Endothelial cell of umbilical vein (primary cell): ENCODE measurements at regions of chr2 and their contacts with region 1.

Region 1: DNA sequence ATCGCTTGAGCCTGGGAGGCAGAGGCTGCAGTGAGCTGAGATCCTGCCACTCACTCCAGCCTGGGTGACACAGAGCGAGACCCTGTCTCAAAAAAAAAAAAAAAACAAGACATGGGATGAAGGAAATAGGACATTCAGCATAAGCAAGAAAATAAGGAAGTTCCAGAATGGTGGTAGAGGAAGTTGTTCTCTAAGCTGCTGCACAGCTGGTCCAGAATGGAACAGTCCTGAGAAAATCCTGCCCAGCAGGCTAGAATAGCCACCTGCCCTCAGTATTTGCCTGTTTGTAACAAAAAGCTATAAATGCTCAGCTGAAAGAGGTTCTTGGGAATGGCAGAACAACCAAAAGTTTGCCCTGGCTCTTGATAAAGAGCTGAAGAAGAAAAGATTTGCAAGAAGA is 11.1 kb upstream of the MAPRE3 start:
- DNase-seq: no peak
- H3K4me3 ChIP-seq: no peak overlapping the region
- H3K27ac ChIP-seq: no peak overlapping the region
- H3K4me1 ChIP-seq: no peaks in the 10 kb centered on the region
- H3K27me3 ChIP-seq: peaks cover 19 to 33% of the 10 kb centered on the region in 2 experiments
- CTCF ChIP-seq: no peak
- POLR2A ChIP-seq: no peak

Region 2: DNA sequence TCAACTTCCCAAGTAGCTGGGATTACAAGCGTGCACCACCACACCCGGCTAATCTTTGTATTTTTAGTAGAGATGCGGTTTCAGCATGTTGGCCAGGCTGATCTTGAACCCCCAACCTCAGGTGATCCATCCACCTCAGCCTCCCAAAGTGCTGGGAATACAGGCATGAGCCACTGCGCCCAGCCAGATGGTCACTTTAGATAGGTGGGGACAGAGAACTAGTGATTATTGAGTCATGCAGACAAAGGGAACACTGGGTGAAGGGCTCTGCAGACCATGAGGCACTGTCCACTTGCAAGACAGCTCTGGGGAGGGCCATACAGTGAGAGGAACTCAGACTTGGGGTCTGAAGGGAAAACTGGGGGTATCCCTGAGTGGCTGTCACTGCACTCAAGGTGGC is 1732.5 kb before region 1 on chr2:
- CTCF ChIA-PET with region 1: no interaction called
- POLR2A ChIA-PET with region 1: no interaction called
- dilution Hi-C with region 1: no loop called
- intact Hi-C with region 1: no loop called
- DNase-seq: no peak
- H3K4me3 ChIP-seq: no peak overlapping the region
- H3K27ac ChIP-seq: no peak overlapping the region
- H3K4me1 ChIP-seq: no peaks in the 10 kb centered on the region
- H3K27me3 ChIP-seq: no peaks in the 10 kb centered on the region
- CTCF ChIP-seq: no peak
- POLR2A ChIP-seq: no peak

Region 3: GRCh38 chr2:26670171-26670570 is 289.2 kb before region 1 on chr2:
- CTCF ChIA-PET with region 1: no interaction called
- POLR2A ChIA-PET with region 1: no interaction called
- dilution Hi-C with region 1: no loop called
- intact Hi-C with region 1: no loop called
- DNase-seq: no peak
- H3K4me3 ChIP-seq: no peak overlapping the region
- H3K27ac ChIP-seq: no peak overlapping the region
- H3K4me1 ChIP-seq: no peaks in the 10 kb centered on the region
- H3K27me3 ChIP-seq: peaks cover 9 to 13% of the 10 kb centered on the region in 2 experiments
- CTCF ChIP-seq: no peak
- POLR2A ChIP-seq: no peak

Region 4: GRCh38 chr2:26970244-26970920 is 11.1 kb after region 1 on chr2 and contains the start of gene MAPRE3:
- CTCF ChIA-PET with region 1: interaction called, 19 read pairs
- POLR2A ChIA-PET with region 1: no interaction called
- dilution Hi-C with region 1: no loop called
- intact Hi-C with region 1: no loop called
- DNase-seq: peak; percentile 85
- H3K4me3 ChIP-seq: peak within 1 kb of the TSS in 2 of 3 experiments; percentile 29 to 75
- H3K27ac ChIP-seq: no peak within 1 kb of the TSS
- H3K4me1 ChIP-seq: peaks cover 2% of the 10 kb centered on the region
- H3K27me3 ChIP-seq: peaks cover 20 to 23% of the 10 kb centered on the region in 2 experiments
- CTCF ChIP-seq: no peak
- POLR2A ChIP-seq: no peak
- total RNA-seq, gene MAPRE3: 5.0 and 6.1 TPM in 2 replicates

Region 5: DNA sequence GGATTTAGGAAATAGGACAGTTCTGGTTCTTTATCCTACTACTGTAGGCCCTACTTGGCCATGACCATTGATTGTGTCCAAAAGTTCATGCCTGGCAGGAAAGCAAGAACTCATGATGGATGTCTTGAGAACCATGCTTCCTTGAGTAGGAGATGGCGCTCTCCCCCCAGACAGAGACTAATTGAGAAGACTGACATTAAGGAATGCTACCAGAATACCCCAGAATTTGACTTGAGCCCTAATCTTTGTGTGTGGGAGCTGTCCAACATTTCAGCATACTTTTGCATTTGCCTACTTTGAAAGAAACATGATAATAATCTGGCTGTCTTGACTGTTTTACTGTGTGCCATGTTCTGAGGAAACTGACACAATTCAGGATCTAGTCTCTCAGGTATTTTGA is 34.4 kb after region 1 on chr2:
- CTCF ChIA-PET with region 1: interaction called, 17 read pairs
- POLR2A ChIA-PET with region 1: no interaction called
- dilution Hi-C with region 1: no loop called
- intact Hi-C with region 1: no loop called
- DNase-seq: no peak
- H3K4me3 ChIP-seq: no peak overlapping the region
- H3K27ac ChIP-seq: no peak overlapping the region
- H3K4me1 ChIP-seq: peaks cover 7% of the 10 kb centered on the region
- H3K27me3 ChIP-seq: peaks cover 8 to 15% of the 10 kb centered on the region in 2 experiments
- CTCF ChIP-seq: no peak
- POLR2A ChIP-seq: no peak

Region 6: DNA sequence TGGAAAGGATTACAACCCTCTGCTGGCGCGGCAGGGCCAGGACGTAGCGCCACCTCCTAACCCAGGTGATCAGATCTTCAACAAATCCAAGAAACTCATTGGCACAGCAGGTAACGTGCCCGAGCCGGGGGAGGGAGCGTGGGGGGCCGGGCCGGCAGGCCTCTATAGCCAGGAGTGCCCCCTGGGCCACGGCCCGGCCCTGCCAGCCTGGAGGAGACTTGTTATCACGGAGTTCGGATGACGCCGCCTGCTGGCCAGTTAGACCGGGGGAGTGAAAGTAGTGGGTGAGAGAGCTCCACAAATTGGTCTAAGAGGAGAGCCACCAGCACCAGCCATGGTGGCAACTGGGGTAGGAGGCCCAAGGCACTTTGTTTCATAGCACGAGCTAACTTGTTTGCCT is 64.9 kb after region 1 on chr2:
- CTCF ChIA-PET with region 1: interaction called, 355 read pairs
- POLR2A ChIA-PET with region 1: no interaction called
- dilution Hi-C with region 1: no loop called
- intact Hi-C with region 1: no loop called
- DNase-seq: no peak
- H3K4me3 ChIP-seq: no peak overlapping the region
- H3K27ac ChIP-seq: no peak overlapping the region
- H3K4me1 ChIP-seq: peaks cover 4% of the 10 kb centered on the region
- H3K27me3 ChIP-seq: no peaks in the 10 kb centered on the region
- CTCF ChIP-seq: no peak
- POLR2A ChIP-seq: no peak

Region 7: DNA sequence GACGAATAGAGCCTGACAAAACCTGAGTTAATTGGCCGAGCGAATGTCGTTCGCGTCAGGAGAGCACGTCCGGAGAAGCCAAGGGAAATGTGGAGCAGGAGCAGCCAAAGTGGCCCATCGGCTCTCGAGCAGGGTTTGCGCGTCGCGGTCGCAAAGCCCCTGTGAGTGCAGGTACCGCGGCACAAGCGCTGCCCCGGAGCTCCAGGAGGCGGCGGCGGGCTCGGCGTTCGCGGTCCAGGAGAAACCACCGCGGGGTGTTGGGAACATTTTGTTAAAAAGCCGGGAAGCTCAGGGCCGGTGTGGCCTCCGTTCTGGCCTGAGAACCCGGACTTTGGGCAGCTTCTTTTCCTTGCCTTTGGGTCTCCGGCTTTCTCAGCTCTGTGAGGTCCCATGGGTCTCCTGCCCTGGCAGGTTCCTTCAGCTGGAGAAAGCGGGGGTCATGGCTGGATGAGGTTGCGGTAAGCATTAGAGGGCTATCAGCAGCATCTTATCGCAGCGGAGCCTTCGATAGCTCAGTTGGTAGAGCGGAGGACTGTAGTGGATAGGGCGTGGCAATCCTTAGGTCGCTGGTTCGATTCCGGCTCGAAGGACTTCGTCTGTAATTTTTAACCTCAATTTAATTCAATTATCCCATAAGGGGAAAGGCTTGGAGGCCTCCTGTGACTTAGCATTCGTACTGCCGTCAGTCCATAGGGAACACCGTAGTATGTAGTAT is 91.1 kb after region 1 on chr2:
- CTCF ChIA-PET with region 1: interaction called, 34 read pairs
- POLR2A ChIA-PET with region 1: no interaction called
- dilution Hi-C with region 1: no loop called
- intact Hi-C with region 1: loop called (anchors 1 kb)
- DNase-seq: peak; percentile 98
- H3K4me3 ChIP-seq: peak overlapping the region; percentile 66 to 76 (median 73)
- H3K27ac ChIP-seq: peak overlapping the region; percentile 60
- H3K4me1 ChIP-seq: peaks cover 12% of the 10 kb centered on the region
- H3K27me3 ChIP-seq: no peaks in the 10 kb centered on the region
- CTCF ChIP-seq: peak; percentile 18 to 52
- POLR2A ChIP-seq: peak; percentile 96

Region 8: DNA sequence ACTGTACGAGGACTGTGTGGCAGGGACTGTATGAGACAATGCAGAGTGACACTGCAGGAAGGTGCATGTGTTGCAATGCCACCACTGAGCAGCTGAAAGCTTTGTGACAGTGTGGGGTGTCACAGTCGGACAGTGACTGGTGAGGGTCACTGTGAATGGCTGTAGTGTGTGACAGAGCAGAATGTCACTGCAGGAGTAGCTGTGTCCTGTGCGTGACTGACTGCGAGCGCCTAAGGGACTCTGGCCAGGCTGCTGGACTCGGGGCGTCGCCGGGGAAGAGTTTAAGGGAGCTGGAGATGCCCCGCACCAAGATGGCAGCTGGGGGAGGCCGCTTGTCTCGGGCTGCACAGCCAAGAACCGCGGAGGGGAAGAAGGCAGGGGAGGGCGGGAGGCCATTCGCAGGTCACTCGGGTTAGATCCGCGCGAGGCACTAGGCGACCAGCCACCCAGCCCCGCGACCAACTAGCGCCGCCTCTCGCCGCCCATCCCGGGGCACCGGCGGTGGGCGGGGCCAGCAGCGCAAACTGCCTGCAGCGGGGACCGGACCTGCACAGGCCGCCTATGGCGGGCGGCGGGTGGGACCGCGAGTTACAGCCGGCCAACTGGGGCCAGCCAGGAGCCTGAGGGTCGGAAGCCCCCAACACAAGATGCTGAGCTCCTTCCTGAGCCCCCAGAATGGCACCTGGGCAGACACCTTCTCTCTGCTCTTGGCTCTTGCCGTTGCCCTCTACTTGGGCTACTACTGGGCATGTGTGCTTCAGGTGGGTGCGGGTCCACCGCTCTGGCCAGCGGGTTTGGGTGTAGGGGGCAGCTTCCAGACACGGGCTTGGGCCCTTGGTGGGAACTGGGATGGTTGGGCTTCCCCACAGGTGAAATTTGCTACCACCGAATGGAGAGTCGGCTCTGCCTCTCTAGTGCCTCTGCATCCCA is 164.2 kb after region 1 on chr2 and contains the start of gene ABHD1:
- CTCF ChIA-PET with region 1: no interaction called
- POLR2A ChIA-PET with region 1: no interaction called
- dilution Hi-C with region 1: no loop called
- intact Hi-C with region 1: no loop called
- DNase-seq: peak; percentile 48
- H3K4me3 ChIP-seq: peak within 1 kb of the TSS in 2 of 3 experiments; percentile 16 to 58
- H3K27ac ChIP-seq: no peak within 1 kb of the TSS
- H3K4me1 ChIP-seq: no peaks in the 10 kb centered on the region
- H3K27me3 ChIP-seq: peaks cover 8 to 20% of the 10 kb centered on the region in 2 experiments
- CTCF ChIP-seq: no peak
- POLR2A ChIP-seq: peak; percentile 31
- total RNA-seq, gene ABHD1: not detected in 2 replicates